HepG2 (cell line): ENCODE measurements at regions of chr1 and their contacts with region 1.

Region 1: GRCh38 chr1:165403835-165404482 is 41.0 kb downstream of the RXRG start:
- DNase-seq: peak; percentile 58
- ATAC-seq: peak; percentile 91
- H3K4me3 ChIP-seq: no peak overlapping the region
- H3K27ac ChIP-seq: no peak overlapping the region
- H3K4me1 ChIP-seq: peaks cover 10% of the 10 kb centered on the region; the same call in 1 of the 2 replicates
- H3K27me3 ChIP-seq: no peaks in the 10 kb centered on the region
- CTCF ChIP-seq: peak; percentile 91
- EP300 ChIP-seq: no peak
- POLR2A ChIP-seq: no peak
- RAD21 ChIP-seq: peak; percentile 81

Region 2: DNA sequence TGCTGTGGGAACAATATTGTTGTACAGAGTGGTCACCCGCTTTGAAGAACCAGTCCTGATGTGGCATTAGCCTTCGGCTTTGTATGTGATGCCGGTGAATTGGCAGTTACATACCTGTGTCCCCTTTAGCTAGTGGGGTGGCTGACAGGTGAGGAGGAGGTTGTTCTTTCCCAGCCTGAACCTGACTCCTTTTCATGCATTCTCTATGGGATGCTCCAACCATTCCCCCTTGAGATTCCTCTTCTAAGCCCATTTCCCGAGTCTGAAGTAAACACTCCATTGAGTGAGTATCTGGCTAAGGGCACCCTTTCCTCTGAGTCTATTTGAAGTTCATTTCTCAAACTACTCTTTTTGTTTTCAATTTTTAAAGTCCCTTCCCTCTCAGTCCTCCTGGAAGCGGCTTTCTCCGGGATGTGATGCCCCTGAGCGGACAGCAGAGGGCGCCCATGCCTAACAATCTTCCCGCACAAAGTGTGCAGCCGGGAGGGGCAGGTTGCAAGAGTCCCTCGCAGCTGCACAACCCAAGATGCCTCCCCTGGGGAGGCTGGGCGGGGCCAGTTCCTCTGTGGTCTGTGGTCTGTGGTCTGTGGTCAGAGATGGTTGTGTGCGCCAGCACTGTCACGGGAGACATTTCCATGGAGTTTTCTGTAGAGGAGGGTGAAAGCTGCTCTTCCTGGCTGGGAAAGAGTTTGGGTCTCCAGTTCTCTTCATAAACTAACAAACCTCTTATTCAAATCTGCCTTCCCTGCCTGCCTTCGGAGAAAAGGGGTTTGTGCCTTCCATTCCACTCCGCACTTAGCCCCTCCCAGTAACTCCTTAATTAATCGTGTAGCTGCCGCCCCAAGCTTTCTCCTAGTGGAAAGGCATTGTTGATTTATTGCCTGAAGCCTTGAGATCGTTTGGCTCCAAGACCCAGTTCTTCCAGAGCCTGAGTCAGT is 11.1 kb before region 1 on chr1:
- CTCF ChIA-PET with region 1: no interaction called
- POLR2A ChIA-PET with region 1: no interaction called
- in situ Hi-C with region 1: no loop called
- intact Hi-C with region 1: loop called (anchors 1 kb)
- DNase-seq: peak; percentile 35
- ATAC-seq: peak; percentile 94
- H3K4me3 ChIP-seq: no peak overlapping the region
- H3K27ac ChIP-seq: no peak overlapping the region
- H3K4me1 ChIP-seq: no peaks in the 10 kb centered on the region
- H3K27me3 ChIP-seq: no peaks in the 10 kb centered on the region
- CTCF ChIP-seq: peak; percentile 91
- EP300 ChIP-seq: no peak
- POLR2A ChIP-seq: no peak
- RAD21 ChIP-seq: peak; percentile 75

Region 3: DNA sequence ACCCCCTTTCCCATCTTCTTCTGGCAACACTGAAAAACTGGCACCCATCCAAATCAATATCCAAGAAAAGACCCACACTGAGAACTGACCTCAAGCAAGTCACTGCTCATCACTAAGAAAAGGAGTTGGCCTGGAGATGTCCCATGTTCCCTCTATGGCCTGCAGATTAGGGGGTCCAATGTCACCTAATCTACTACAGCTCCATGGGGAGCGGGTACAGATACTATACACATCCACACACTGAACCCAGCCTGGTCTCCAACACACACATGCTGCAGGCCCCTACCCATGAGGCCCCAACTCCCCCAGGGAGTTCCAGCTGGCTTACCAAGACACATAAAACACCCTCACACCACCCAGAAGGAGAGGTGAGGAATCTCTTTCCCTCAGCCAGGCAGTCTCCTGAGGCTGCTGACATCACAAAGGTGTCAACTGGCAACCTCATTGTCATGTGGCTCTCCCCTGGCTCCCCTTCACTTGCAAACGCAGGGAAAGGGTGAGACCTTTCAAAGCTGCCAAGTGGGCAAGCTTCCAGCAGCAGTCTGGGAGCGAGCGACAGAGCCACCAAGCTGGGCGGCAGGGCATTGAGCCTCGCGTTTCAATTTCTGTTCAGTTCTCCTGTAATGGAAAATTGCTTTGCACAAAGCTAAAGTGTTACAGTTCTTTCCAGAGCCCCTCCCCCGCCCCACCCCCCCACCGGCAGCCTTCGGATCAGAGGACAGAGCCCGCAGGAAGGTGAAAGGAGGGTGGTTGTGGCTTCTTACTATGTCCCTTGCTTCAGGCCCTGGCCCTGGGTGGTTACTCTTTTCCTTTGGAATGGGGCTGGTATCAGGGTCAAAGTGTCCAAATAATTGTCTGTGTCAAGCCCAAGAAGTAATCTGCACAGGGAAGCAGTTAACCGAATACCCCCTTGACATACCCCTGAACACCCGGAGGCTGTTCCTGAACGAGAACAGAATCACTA is 139.9 kb after region 1 on chr1 and contains the start of gene LRRC52:
- CTCF ChIA-PET with region 1: no interaction called
- POLR2A ChIA-PET with region 1: no interaction called
- in situ Hi-C with region 1: no loop called
- intact Hi-C with region 1: no loop called
- DNase-seq: no peak
- ATAC-seq: peak; percentile 32; the same call in 2 of the 3 replicates
- H3K4me3 ChIP-seq: no peak within 1 kb of the TSS
- H3K27ac ChIP-seq: no peak within 1 kb of the TSS
- H3K4me1 ChIP-seq: peaks cover 6% of the 10 kb centered on the region; the same call in 1 of the 2 replicates
- H3K27me3 ChIP-seq: peaks cover 0 to 4% of the 10 kb centered on the region in 2 experiments; a peak in 1 of 5 replicates
- CTCF ChIP-seq: no peak
- EP300 ChIP-seq: no peak
- POLR2A ChIP-seq: no peak
- RAD21 ChIP-seq: no peak
- total RNA-seq, gene LRRC52: not detected in 2 replicates